ENCODE measurements at regions of chr18 and their contacts with region 1.

Region 1: DNA sequence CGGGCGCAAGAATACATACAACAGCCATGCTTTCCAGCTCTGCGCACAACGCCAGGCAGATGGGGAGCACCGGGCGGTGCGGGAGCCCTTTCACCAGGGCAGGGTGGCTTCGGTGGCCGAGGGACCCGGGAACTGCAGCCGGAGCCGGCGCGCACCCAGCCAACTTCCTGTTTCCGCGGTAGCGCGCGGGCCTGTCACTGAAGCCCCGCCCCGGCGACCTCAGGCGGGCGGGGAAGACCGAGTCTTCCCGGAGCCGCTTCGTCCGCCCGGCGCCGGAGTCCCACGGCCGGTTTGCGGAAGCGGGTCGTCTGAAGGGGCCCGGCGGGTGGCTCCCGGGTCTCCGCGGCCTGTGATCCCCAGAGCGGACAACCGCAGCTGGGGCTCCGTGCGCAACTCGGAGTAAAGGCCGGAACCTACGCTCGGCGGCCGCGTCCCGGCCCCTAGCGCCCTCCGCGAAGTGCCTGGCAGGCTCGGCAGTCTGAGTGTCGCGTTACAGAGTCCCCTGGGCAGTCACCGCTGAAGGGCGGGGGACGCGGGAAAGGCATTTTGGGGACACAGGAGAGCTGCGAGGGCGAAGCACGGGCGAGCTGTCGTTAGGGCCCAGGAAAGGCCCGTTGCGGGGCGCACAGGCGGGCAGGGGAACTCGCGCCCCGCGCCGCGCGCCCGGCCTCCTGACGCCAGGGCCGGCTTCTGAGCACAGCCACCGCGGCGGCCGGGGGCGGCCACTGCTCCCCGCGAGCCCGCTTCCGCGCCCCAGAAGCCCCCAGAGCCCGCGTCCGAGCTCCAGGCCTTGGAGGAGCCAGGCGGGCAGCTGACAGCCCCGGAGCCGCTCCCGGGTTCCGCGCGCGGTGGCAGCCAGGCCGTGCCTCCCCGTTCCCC is at the start of gene MPPE1:
- DNase-seq: peak; percentile 89 to 94
- ATAC-seq: peak; percentile 92
- total RNA-seq, gene MPPE1: 57.9 to 61.0 TPM

Region 2: GRCh38 chr18:11857177-11857887 is 51.1 kb before region 1 on chr18:
- intact Hi-C with region 1: loop called in 1 of 2 experiments (anchors 5 kb)
- DNase-seq: peak; percentile 72 to 89
- ATAC-seq: peak; percentile 85

Region 3: DNA sequence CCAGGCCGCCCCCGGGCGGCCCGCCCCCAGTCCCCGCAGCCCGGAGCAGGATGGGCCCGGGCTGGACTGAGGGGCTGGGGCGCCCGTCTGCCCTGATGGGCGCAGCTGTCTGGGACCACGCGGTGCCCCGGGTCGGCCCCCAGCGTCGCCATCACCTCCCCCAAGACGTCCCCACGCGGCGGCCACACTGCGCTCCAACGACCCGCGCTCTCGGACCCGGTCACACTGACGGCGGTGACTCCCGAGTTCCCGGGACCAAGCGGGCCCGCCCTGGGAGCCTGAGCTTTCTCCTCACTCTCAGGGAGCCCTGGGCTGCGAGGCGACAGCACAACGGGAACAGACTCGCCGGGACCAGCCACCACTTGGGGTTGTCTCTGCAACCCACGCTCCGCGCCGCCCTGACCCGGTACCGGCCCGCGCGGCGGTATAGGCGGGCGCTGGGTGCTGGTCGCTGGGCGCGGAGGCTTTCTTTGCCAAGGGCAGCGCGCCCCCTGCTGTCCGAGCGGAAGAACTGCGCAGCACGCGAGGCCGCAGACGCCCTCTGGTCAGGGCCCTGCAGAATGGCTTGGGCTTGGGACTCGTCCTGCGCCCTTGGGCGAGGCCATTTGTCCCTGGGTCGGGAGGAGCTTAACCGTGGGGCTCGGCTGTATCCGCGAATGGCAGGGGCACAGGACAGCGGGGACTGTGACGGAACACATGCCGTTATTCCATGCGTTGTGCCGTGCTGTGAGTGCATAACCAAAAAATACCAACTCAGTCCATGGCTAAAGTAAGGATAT is 130.4 kb after region 1 on chr18:
- intact Hi-C with region 1: no loop called
- DNase-seq: peak; percentile 76 to 83
- ATAC-seq: peak; percentile 88